PC-3 (cell line): ENCODE measurements at regions of chr20 and their contacts with region 1.

Region 1: GRCh38 chr20:22346716-22347115 is 237.7 kb downstream of the FOXA2 start:
- DNase-seq: peak; percentile 90
- ATAC-seq: peak; percentile 83
- H3K4me3 ChIP-seq: no peak overlapping the region
- H3K27ac ChIP-seq: no peak overlapping the region
- H3K4me1 ChIP-seq: peaks cover 27% of the 10 kb centered on the region
- H3K27me3 ChIP-seq: no peaks in the 10 kb centered on the region
- CTCF ChIP-seq: no peak

Region 2: GRCh38 chr20:22217712-22218352 is 128.9 kb before region 1 on chr20:
- CTCF ChIA-PET with region 1: no interaction called
- POLR2A ChIA-PET with region 1: no interaction called
- intact Hi-C with region 1: no loop called
- DNase-seq: no peak
- ATAC-seq: no peak
- H3K4me3 ChIP-seq: no peak overlapping the region
- H3K27ac ChIP-seq: no peak overlapping the region
- H3K4me1 ChIP-seq: no peaks in the 10 kb centered on the region
- H3K27me3 ChIP-seq: peaks cover 95% of the 10 kb centered on the region
- CTCF ChIP-seq: no peak

Region 3: DNA sequence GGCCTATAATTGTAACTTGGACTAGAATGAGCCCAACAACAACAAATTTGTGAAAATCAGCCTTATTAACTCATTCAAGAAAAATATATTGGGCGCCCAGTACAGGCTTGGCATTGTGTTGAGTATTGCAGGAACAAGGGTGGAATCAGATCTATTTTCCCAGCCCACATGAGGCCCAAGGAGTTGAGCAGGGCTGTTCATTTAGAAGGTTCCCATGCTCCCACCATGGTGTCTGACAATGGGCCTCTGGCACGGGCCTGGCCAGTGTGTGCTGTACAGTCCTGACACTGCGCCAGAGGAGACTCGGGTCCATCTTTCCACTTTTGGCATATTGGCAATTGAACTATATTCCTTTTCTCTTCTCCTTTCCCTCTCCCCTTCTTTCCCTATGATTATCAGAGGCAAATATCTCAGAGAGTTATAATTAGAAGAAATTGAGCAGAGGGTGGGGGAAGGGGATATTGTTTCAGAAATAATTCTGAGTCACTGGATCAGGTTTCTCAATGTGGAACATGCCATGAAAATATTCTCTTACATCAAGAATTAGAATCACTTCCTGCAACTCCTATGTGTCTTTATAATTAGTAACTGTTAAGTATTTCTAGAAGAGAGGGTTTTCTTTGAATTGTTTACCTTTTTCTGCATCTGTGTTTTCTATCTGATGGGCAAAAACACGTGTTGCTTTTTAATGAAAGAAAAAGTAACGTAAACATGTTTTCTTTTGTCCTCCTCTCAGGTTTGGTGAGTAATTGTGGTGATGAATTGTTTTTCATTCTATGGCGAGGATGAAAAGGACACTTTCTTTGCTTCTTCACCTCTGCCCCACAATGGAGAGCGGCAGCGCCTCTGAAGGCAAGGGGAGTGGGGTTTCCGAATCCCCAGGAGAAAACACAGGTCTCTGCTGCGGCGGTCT is 28.2 kb after region 1 on chr20:
- CTCF ChIA-PET with region 1: no interaction called
- POLR2A ChIA-PET with region 1: no interaction called
- intact Hi-C with region 1: loop called (anchors 1 kb)
- DNase-seq: peak; percentile 76
- ATAC-seq: peak; percentile 18
- H3K4me3 ChIP-seq: peak overlapping the region; percentile 43
- H3K27ac ChIP-seq: peak overlapping the region; percentile 85
- H3K4me1 ChIP-seq: peaks cover 65% of the 10 kb centered on the region
- H3K27me3 ChIP-seq: no peaks in the 10 kb centered on the region
- CTCF ChIP-seq: no peak

Region 4: GRCh38 chr20:22511943-22512910 is 165.5 kb after region 1 on chr20:
- CTCF ChIA-PET with region 1: no interaction called
- POLR2A ChIA-PET with region 1: no interaction called
- intact Hi-C with region 1: loop called (anchors 2 kb)
- DNase-seq: peak; percentile 99
- ATAC-seq: peak; percentile 97
- H3K4me3 ChIP-seq: no peak overlapping the region; the same call in 1 of the 2 replicates
- H3K27ac ChIP-seq: peak overlapping the region; percentile 88
- H3K4me1 ChIP-seq: peaks cover 29% of the 10 kb centered on the region
- H3K27me3 ChIP-seq: no peaks in the 10 kb centered on the region
- CTCF ChIP-seq: no peak

Region 5: GRCh38 chr20:23350196-23350903 is 1003.6 kb after region 1 on chr20 and contains the start of gene NXT1:
- CTCF ChIA-PET with region 1: no interaction called
- POLR2A ChIA-PET with region 1: no interaction called
- intact Hi-C with region 1: loop called (anchors 1 kb)
- DNase-seq: peak; percentile 99
- ATAC-seq: peak; percentile 87
- H3K4me3 ChIP-seq: peak within 1 kb of the TSS; percentile 89
- H3K27ac ChIP-seq: peak within 1 kb of the TSS; percentile 87
- H3K4me1 ChIP-seq: peaks cover 18% of the 10 kb centered on the region
- H3K27me3 ChIP-seq: no peaks in the 10 kb centered on the region
- CTCF ChIP-seq: no peak
- total RNA-seq, gene NXT1: 82.0 and 98.0 TPM in 2 replicates